Common myeloid progenitor, CD34-positive (primary cell): ENCODE measurements at regions of chr5 and their contacts with region 1.

Region 1: DNA sequence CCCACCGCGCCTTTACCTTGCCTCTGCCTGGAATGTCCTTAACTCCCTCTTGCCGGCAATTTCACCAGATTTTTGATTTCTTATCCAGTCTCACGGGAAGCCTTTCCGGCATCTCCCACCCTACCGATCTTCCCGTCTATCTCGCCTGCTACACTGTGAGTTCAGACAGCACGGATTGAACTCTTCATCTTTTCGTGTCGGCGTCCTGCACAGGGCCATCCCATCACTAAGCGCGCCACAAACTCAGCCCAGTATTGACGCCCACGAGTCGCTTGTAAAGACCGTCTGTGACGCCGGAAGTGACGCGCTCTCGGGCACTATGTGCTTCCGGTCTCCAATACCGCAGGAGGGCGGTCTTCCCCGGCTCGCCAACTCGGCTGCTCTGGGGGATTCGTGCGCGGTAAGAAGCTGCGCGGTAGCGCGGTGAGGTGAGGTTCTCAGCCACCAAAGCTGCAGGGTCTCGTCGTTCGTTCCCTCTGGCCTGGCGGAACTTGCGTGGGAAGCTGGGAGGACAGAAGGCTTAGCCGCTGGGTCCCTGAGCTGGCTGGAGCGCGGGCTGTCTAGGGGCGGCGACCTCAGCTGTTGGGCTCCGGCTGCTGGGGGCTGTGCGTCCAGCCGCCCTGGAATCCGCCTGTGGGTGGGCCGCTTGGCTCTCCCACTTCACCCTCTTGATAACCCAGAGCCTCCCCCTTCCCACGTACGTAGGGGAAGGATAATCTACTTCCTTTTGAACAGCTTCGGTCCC is at the start of gene ZCCHC9:
- DNase-seq: peak; percentile 97 to 99 (median 99)
- H3K4me3 ChIP-seq: peak within 1 kb of the TSS; percentile 87 to 100 (median 95)
- H3K27ac ChIP-seq: peak within 1 kb of the TSS; percentile 89 to 95
- H3K4me1 ChIP-seq: peaks cover 6 to 29% (median 23%) of the 10 kb centered on the region in 4 experiments
- H3K27me3 ChIP-seq: no peaks in the 10 kb centered on the region

Region 2: GRCh38 chr5:81288021-81288433 is 13.4 kb before region 1 on chr5:
- CTCF ChIA-PET with region 1: interaction called, 12 read pairs
- POLR2A ChIA-PET with region 1: no interaction called
- DNase-seq: no peak
- H3K4me3 ChIP-seq: no peak overlapping the region
- H3K27ac ChIP-seq: no peak overlapping the region
- H3K4me1 ChIP-seq: no peaks in the 10 kb centered on the region
- H3K27me3 ChIP-seq: no peaks in the 10 kb centered on the region

Region 3: DNA sequence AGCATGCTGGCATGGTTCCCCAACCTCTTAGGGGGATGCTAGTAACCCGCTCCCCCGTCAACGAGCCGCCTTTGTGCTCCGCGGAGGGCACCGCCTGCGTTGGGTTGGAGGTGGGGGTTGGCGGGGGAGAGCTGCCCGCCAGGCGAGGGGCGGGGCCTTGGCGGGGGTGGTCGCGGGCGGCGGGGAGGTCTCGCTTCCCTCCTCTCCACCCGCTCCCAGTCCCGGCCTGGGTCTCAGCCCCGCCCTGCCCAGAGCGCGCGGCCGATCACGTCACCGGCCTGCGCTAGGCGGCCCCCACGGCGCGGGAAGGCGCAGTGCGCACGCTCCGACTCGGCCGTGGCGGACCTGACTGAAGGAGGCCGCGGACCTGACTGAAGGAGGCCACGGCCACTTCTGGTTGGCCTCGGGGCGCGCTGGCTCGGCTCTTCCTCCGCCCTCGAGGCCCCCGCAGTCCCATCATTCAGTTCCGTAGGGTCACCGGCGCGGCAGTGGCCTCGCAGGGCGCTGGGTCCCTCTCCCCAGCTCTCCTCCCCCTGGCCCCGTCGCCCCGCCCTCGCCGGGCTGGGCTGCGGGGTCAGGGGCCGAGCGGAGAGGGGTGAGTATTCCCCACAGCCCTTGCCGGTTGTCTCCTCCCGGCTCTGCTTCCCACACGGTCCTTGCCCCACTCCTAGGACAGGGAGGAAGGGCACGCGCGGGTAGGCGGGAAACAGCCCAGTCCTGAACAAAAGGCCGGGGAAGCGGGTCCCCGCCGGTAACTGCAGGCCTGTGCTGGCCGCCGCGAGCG is 670.5 kb after region 1 on chr5 and contains the start of gene ATG10:
- CTCF ChIA-PET with region 1: no interaction called
- POLR2A ChIA-PET with region 1: no interaction called
- DNase-seq: peak; percentile 94 to 98 (median 97)
- H3K4me3 ChIP-seq: peak within 1 kb of the TSS; percentile 81 to 98 (median 90)
- H3K27ac ChIP-seq: peak within 1 kb of the TSS; percentile 88 to 94
- H3K4me1 ChIP-seq: peaks cover 0 to 13% (median 8%) of the 10 kb centered on the region in 4 experiments
- H3K27me3 ChIP-seq: no peaks in the 10 kb centered on the region